Right ventricle myocardium superior (tissue), 1 donor: ENCODE measurements at regions of chr2 and their contacts with region 1.

Region 1: GRCh38 chr2:236369661-236370062 is 105.5 kb upstream of the ASB18 start:
- DNase-seq: peak; percentile 77
- ATAC-seq: peak; percentile 61

Region 2: DNA sequence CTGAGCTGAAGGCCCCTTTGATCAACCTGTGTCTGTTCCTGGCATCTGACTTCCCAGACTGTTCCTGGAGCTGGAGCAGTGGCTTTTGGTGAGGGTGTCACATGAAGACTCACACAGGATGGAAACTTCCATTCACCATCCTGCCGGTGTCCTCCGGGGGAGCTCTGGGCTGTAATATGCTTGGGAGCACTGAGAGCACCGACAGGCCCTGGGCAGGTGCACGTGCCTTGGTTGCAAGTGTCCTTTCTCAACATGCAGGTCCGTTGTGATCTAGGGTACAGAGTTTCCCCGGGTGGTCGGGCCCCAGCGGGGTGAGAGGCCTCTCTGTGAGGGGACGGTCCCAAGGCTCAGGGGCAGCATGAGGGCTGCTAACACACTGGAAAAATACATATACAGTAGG is 176.6 kb before region 1 on chr2:
- intact Hi-C with region 1: no loop called
- DNase-seq: no peak
- ATAC-seq: no peak

Region 3: GRCh38 chr2:236338495-236339184 is 31.0 kb before region 1 on chr2:
- intact Hi-C with region 1: no loop called
- DNase-seq: no peak
- ATAC-seq: peak; percentile 48

Region 4: DNA sequence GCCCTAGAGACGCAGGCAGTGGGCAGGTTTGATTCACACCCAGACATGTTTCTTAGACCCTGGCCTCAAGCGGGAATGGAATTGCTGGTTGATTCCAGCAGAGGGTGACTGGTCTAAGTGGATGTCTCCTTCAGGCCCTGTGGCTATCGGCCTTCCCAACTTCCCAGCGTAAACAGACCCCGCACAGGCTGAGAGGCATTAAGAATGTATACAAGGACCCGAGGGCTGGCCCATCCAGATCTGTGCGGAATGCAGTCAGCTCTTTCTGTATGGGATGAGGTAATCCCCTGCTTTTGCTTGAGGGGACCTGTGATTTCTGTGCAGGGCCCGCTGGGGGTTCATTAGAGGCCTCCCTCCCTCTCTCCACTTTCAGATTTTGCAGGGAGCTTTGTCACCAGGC is 206.4 kb after region 1 on chr2:
- intact Hi-C with region 1: loop called (anchors 10 kb)
- DNase-seq: no peak
- ATAC-seq: no peak